Endothelial cell of umbilical vein (primary cell): ENCODE measurements at regions of chr1 and their contacts with region 1.

Region 1: DNA sequence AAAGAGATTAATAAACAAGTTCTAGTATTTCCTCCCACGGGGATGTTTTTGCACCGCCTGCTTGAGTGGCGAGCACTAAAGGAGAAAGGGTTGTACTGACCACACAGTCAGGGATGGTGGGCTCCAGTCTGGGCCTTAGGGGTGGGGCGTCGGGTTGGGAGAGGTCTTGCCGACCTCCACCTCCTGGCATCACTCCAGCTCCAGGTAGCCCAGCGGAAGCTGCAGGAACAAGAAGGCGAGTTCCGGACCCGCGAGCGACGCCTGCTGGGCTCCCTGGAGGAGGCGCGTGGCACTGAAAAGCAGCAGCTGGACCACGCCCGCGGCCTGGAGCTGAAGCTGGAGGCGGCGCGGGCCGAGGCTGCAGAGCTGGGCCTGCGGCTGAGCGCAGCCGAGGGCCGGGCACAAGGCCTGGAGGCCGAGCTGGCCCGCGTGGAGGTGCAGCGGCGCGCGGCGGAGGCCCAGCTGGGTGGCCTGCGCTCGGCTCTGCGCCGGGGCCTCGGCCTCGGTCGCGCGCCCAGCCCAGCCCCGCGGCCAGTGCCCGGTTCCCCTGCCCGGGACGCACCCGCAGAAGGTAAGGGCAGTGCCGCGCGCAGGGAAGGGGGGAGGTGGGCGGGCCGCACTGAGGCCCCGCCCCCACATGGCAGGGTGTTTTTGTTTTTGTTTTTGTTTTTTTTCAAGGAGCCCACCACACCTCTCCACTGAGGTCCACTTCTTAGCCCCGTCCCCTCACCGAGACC is 19.7 kb downstream of the MFAP2 start:
- DNase-seq: peak; percentile 69
- H3K4me3 ChIP-seq: peak overlapping the region in 2 of 3 experiments; percentile 18 to 27
- H3K27ac ChIP-seq: no peak overlapping the region
- H3K4me1 ChIP-seq: no peaks in the 10 kb centered on the region
- H3K27me3 ChIP-seq: no peaks in the 10 kb centered on the region
- CTCF ChIP-seq: peak; percentile 77 to 85
- POLR2A ChIP-seq: peak; percentile 64

Region 2: GRCh38 chr1:16888860-16889816 is 71.6 kb before region 1 on chr1:
- CTCF ChIA-PET with region 1: no interaction called
- POLR2A ChIA-PET with region 1: no interaction called
- dilution Hi-C with region 1: no loop called
- intact Hi-C with region 1: no loop called
- DNase-seq: peak; percentile 85
- H3K4me3 ChIP-seq: peak overlapping the region; percentile 51 to 93 (median 85)
- H3K27ac ChIP-seq: peak overlapping the region; percentile 52
- H3K4me1 ChIP-seq: peaks cover 12% of the 10 kb centered on the region
- H3K27me3 ChIP-seq: peaks cover 6 to 14% of the 10 kb centered on the region in 2 experiments
- CTCF ChIP-seq: peak; percentile 18 to 24
- POLR2A ChIP-seq: no peak

Region 3: DNA sequence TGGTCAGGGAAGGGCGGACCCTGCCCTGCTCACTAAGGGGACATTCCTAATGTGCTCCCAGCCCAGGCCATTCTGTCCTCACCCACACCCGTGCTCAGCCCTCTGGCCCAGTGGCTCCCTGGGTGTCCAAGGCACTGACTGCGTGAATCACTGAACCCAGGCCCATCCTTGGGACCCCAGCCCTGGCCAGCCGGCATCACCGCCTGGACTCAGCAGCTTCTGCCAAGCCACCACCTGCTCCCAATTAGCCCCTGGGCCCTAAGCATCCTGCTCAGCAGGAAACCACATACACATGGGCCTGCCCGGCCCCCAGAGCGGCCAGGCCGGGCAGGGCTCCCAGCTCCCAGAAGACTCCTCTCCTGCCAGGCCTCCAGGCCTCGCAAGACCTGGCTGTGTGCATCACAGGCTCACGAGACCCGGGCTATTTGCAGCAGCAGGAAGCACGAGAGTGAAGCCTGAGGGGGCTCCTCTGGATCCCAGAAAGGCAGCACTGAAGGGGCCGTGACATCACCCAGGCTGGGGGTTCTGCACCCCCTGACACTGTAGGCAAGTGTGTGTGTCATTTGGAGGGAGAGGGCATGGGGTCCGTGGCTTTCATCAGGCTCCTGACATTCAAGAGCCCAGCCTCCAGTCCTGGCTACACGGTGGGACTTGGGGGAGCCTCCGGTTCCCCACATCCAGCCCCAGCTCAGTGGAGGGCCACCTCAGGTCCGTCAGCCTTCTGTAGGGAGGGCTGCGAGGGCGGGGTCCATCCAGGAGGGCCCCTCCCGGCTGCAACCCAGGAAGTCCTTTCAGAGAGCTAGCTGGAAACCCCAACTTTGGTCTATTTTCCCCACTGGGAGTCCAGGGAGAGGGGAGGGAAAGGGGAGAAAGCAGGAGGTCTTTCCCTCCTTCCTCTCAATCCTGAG is 18.1 kb after region 1 on chr1:
- CTCF ChIA-PET with region 1: interaction called, 16 read pairs
- POLR2A ChIA-PET with region 1: interaction called, 5 read pairs
- dilution Hi-C with region 1: no loop called
- intact Hi-C with region 1: loop called (anchors 1 kb)
- DNase-seq: peak; percentile 61
- H3K4me3 ChIP-seq: peak overlapping the region in 2 of 3 experiments; percentile 52 to 72
- H3K27ac ChIP-seq: no peak overlapping the region
- H3K4me1 ChIP-seq: peaks cover 14% of the 10 kb centered on the region
- H3K27me3 ChIP-seq: no peaks in the 10 kb centered on the region
- CTCF ChIP-seq: no peak
- POLR2A ChIP-seq: no peak

Region 4: DNA sequence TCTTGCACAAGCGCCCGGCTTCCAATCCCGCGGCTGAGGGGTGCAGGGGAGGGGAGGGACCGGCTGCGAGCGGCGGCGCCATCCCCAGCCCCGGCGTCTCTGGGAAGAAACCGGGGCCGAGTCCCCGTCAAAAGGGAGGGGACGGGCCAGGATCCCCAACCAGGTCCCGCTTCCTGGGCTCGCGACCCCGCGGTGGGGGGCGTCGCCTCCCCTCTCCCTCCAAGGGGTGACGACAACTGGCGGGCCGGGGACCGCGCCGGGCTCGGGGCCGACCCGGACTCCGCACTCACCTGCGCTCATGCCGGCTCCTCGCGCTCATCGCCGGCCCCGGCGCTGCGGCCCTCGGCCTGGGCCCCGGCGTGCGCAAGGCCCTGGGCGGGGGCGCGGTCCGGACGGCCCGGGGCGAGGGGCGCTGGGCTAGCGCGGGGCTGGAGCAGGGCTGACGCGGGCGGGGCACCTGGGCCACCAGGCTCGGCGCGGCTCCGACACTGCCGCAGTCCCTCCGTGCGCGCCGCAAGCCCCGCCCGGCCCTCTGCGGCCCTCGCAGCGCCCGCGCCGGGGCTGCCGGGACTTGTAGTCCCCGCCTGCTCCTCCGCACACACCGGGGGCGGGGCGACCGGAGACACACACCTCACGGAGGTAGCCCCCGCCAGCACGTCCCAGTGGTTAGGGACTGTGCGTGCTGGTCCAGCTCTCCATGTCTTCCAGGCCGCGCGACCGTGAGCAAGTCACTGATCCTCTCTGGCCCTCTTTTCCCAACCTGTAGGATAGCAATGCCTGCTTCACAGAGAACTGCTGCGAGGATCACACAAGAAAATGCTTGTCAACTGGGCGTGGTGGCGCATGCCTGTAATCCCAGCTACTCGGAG is 50.9 kb after region 1 on chr1 and contains the start of gene ATP13A2:
- CTCF ChIA-PET with region 1: interaction called, 12 read pairs
- POLR2A ChIA-PET with region 1: no interaction called
- dilution Hi-C with region 1: no loop called
- intact Hi-C with region 1: loop called (anchors 1 kb)
- DNase-seq: peak; percentile 75
- H3K4me3 ChIP-seq: peak within 1 kb of the TSS; percentile 20 to 62 (median 59)
- H3K27ac ChIP-seq: no peak within 1 kb of the TSS
- H3K4me1 ChIP-seq: peaks cover 24% of the 10 kb centered on the region
- H3K27me3 ChIP-seq: no peaks in the 10 kb centered on the region
- CTCF ChIP-seq: no peak
- POLR2A ChIP-seq: no peak
- total RNA-seq, gene ATP13A2: 44.9 and 52.3 TPM in 2 replicates

Region 5: DNA sequence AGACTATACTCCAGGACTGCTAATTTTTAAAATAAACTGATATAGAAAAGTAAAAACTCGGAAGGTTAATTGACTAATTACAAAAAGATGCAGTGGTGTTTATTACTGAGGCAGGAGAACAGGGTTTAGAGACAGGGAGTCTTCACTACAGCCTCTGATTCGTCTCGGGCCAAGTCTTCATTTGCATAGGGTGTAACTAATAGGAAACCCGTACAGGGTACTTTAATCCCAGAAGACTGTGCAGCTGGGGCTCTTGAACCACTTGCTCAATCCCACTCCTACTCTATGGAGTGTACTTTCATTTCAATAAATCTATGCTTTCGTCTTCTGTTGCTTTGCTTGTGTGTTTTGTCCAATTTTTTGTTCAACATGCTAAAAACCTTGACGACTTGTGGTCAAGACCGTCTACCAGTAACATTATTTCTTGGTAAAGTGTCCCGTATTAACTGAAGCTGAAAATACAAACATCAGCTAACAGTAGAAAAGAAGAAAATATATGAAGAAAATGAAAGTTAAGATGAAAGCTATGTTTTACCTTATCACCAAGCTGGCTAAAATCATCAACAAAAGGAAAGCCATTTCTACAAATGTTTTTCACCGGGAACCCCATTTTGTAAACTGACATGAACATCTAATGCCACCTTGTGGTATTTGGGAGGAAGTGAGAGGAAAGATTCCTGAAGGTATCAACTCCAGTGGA is 85.1 kb after region 1 on chr1:
- CTCF ChIA-PET with region 1: interaction called, 32 read pairs
- POLR2A ChIA-PET with region 1: no interaction called
- dilution Hi-C with region 1: no loop called
- intact Hi-C with region 1: loop called (anchors 1 kb)
- DNase-seq: peak; percentile 60
- H3K4me3 ChIP-seq: no peak overlapping the region
- H3K27ac ChIP-seq: no peak overlapping the region
- H3K4me1 ChIP-seq: peaks cover 3% of the 10 kb centered on the region
- H3K27me3 ChIP-seq: no peaks in the 10 kb centered on the region
- CTCF ChIP-seq: peak; percentile 51 to 58
- POLR2A ChIP-seq: no peak

Region 6: GRCh38 chr1:17075470-17076255 is 114.9 kb after region 1 on chr1:
- CTCF ChIA-PET with region 1: no interaction called
- POLR2A ChIA-PET with region 1: no interaction called
- dilution Hi-C with region 1: no loop called
- intact Hi-C with region 1: no loop called
- DNase-seq: no peak
- H3K4me3 ChIP-seq: no peak overlapping the region
- H3K27ac ChIP-seq: no peak overlapping the region
- H3K4me1 ChIP-seq: no peaks in the 10 kb centered on the region
- H3K27me3 ChIP-seq: no peaks in the 10 kb centered on the region
- CTCF ChIP-seq: peak; percentile 22 to 24
- POLR2A ChIP-seq: no peak